CD8-positive, alpha-beta T cell (primary cell): ENCODE measurements at regions of chr2 and their contacts with region 1.

Region 1: GRCh38 chr2:240513549-240514287 is 44.1 kb downstream of the ANKMY1 start:
- DNase-seq: peak; percentile 69 to 90 (median 86)
- ATAC-seq: peak; percentile 99
- H3K4me3 ChIP-seq: no peak overlapping the region
- H3K4me3 Mint-ChIP-seq: no peak overlapping the region
- H3K27ac ChIP-seq: peak overlapping the region in 1 of 2 experiments; percentile 12
- H3K27ac Mint-ChIP-seq: peak overlapping the region; percentile 76
- H3K4me1 ChIP-seq: no peaks in the 10 kb centered on the region
- H3K4me1 Mint-ChIP-seq: peaks cover 7% of the 10 kb centered on the region
- H3K27me3 ChIP-seq: no peaks in the 10 kb centered on the region
- H3K27me3 Mint-ChIP-seq: no peaks in the 10 kb centered on the region
- CTCF ChIP-seq: peak; percentile 85

Region 2: GRCh38 chr2:240524963-240525718 is 11.4 kb after region 1 on chr2:
- CTCF ChIA-PET with region 1: interaction called, 14 read pairs
- POLR2A ChIA-PET with region 1: no interaction called
- intact Hi-C with region 1: no loop called
- DNase-seq: peak in 1 of 9 experiments; percentile 17
- ATAC-seq: no peak
- H3K4me3 ChIP-seq: no peak overlapping the region
- H3K4me3 Mint-ChIP-seq: no peak overlapping the region
- H3K27ac ChIP-seq: no peak overlapping the region
- H3K27ac Mint-ChIP-seq: no peak overlapping the region
- H3K4me1 ChIP-seq: no peaks in the 10 kb centered on the region
- H3K4me1 Mint-ChIP-seq: peaks cover 3% of the 10 kb centered on the region
- H3K27me3 ChIP-seq: no peaks in the 10 kb centered on the region
- H3K27me3 Mint-ChIP-seq: no peaks in the 10 kb centered on the region
- CTCF ChIP-seq: no peak

Region 3: GRCh38 chr2:240586198-240586918 is 72.6 kb after region 1 on chr2 and contains the start of gene CAPN10:
- CTCF ChIA-PET with region 1: interaction called, 25 read pairs
- POLR2A ChIA-PET with region 1: interaction called, 11 read pairs
- intact Hi-C with region 1: loop called (anchors 5 kb)
- DNase-seq: peak; percentile 92 to 98 (median 97)
- ATAC-seq: peak; percentile 80
- H3K4me3 ChIP-seq: peak within 1 kb of the TSS; percentile 82 to 95
- H3K4me3 Mint-ChIP-seq: peak within 1 kb of the TSS; percentile 88
- H3K27ac ChIP-seq: peak within 1 kb of the TSS; percentile 86 to 90
- H3K27ac Mint-ChIP-seq: peak within 1 kb of the TSS; percentile 94
- H3K4me1 ChIP-seq: peaks cover 37% of the 10 kb centered on the region
- H3K4me1 Mint-ChIP-seq: peaks cover 57% of the 10 kb centered on the region
- H3K27me3 ChIP-seq: no peaks in the 10 kb centered on the region
- H3K27me3 Mint-ChIP-seq: no peaks in the 10 kb centered on the region
- CTCF ChIP-seq: no peak
- total RNA-seq, gene CAPN10: 65.9 to 68.9 TPM

Region 4: GRCh38 chr2:240704651-240705050 is 190.9 kb after region 1 on chr2:
- CTCF ChIA-PET with region 1: interaction called, 7 read pairs
- POLR2A ChIA-PET with region 1: no interaction called
- intact Hi-C with region 1: loop called (anchors 5 kb)
- DNase-seq: peak in 5 of 9 experiments; percentile 39 to 65 (median 46)
- ATAC-seq: peak; percentile 63
- H3K4me3 ChIP-seq: peak overlapping the region in 1 of 2 experiments; percentile 41
- H3K4me3 Mint-ChIP-seq: peak overlapping the region; percentile 47
- H3K27ac ChIP-seq: no peak overlapping the region
- H3K27ac Mint-ChIP-seq: no peak overlapping the region
- H3K4me1 ChIP-seq: peaks cover 20% of the 10 kb centered on the region
- H3K4me1 Mint-ChIP-seq: peaks cover 14% of the 10 kb centered on the region
- H3K27me3 ChIP-seq: no peaks in the 10 kb centered on the region
- H3K27me3 Mint-ChIP-seq: peaks cover 9% of the 10 kb centered on the region
- CTCF ChIP-seq: no peak

Region 5: GRCh38 chr2:240733803-240734495 is 220.2 kb after region 1 on chr2:
- CTCF ChIA-PET with region 1: no interaction called
- POLR2A ChIA-PET with region 1: no interaction called
- intact Hi-C with region 1: loop called in 1 of 2 experiments (anchors 10 kb)
- DNase-seq: peak in 5 of 9 experiments; percentile 19 to 52 (median 37)
- ATAC-seq: no peak
- H3K4me3 ChIP-seq: no peak overlapping the region
- H3K4me3 Mint-ChIP-seq: no peak overlapping the region
- H3K27ac ChIP-seq: no peak overlapping the region
- H3K27ac Mint-ChIP-seq: no peak overlapping the region
- H3K4me1 ChIP-seq: no peaks in the 10 kb centered on the region
- H3K4me1 Mint-ChIP-seq: no peaks in the 10 kb centered on the region
- H3K27me3 ChIP-seq: no peaks in the 10 kb centered on the region
- H3K27me3 Mint-ChIP-seq: peaks cover 3% of the 10 kb centered on the region
- CTCF ChIP-seq: no peak

Region 6: DNA sequence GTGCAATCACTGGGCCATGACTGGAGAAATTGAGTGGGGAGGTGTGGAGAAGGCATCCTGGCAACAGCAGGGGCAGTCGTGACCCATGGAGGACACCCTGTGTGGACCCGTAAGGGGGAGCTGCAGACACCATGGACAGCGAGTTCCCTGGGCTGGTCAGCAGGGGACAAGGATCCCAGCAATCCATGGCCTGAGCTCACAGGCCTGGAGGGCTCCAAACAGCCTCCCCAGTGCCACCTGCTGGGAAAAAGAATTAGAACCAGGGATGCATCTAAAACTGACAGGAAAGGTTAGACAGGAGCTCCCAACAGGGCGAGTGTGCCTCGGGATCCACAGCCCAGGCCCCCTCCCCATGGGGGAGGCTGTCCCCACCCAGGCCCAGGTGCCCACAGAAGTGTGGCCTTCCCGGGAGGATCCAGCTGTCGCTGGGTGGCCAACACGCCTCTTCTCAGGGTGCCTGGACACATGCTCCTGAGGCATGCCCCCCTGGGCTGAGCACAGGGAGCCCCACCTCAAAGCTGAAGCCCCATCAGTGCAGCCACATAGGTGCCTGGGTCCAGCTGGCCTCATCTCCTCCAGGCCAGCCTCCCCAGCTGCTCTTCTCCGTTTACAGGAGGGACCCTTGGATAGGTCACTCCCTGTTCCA is 326.8 kb after region 1 on chr2:
- CTCF ChIA-PET with region 1: interaction called, 12 read pairs
- POLR2A ChIA-PET with region 1: no interaction called
- intact Hi-C with region 1: loop called in 1 of 2 experiments (anchors 1 kb)
- DNase-seq: peak in 3 of 9 experiments; percentile 27 to 49 (median 30)
- ATAC-seq: no peak
- H3K4me3 ChIP-seq: no peak overlapping the region
- H3K4me3 Mint-ChIP-seq: no peak overlapping the region
- H3K27ac ChIP-seq: no peak overlapping the region
- H3K27ac Mint-ChIP-seq: no peak overlapping the region
- H3K4me1 ChIP-seq: no peaks in the 10 kb centered on the region
- H3K4me1 Mint-ChIP-seq: no peaks in the 10 kb centered on the region
- H3K27me3 ChIP-seq: no peaks in the 10 kb centered on the region
- H3K27me3 Mint-ChIP-seq: peaks cover 4% of the 10 kb centered on the region
- CTCF ChIP-seq: peak; percentile 33